ENCODE measurements at regions of chr5 and their contacts with region 1.

Region 1: DNA sequence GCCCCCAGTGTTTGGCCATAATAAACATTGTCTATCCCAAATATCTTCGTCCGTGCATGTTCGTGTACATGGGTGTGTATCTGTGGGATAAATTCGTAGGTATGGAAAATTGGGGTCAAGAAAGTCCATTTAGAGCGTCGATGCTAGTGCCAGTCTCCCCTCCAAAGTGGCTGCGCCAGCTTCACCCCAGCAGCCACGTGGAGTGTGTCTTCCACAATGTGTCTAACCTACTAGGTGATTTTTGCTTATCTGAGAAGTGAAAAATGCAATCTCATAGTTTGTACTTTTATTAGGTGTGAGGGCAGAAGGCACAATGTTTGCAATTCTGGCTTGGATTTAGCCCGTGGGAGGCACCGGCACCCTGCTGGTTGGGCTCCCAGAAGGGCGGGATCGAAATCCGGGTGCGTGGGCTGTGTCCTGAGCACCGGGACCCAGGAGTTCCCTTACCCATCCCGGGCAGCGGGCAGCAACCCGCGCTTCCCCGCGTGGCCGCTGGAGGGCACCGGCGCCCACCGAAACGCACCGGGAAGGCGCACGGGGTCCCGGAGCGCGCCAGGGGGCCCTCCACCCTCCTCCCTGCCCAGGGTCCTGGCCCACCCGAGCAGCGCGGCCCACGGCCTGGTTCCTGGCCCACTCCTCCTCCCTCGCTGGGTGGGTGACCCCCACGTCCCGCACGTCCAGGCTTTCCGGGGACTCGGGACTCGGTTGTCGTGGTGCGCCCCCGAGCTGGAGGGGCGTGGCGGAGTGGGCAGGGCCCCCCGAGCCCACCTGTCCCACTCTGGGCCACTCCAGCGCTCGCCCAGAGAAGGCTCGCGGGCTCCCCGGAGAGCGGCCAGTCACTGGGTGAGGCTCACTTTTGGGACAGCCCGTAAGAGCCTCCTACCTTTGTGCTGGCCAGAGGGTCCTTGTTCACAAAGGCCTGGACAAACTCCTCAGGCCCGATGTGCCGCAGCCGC is 55.4 kb upstream of the RNF130 start:
- DNase-seq: no peak
- ATAC-seq: peak; percentile 92
- H3K4me3 ChIP-seq: no peak overlapping the region
- H3K27ac ChIP-seq: no peak overlapping the region
- H3K4me1 ChIP-seq: peaks cover 0 to 9% of the 10 kb centered on the region in 2 experiments; a peak in 1 of 4 replicates
- H3K27me3 ChIP-seq: no peaks in the 10 kb centered on the region
- CTCF ChIP-seq: peak; percentile 81 to 84 (median 83)
- POLR2A ChIP-seq: no peak
- RAD21 ChIP-seq: peak; percentile 86

Region 2: DNA sequence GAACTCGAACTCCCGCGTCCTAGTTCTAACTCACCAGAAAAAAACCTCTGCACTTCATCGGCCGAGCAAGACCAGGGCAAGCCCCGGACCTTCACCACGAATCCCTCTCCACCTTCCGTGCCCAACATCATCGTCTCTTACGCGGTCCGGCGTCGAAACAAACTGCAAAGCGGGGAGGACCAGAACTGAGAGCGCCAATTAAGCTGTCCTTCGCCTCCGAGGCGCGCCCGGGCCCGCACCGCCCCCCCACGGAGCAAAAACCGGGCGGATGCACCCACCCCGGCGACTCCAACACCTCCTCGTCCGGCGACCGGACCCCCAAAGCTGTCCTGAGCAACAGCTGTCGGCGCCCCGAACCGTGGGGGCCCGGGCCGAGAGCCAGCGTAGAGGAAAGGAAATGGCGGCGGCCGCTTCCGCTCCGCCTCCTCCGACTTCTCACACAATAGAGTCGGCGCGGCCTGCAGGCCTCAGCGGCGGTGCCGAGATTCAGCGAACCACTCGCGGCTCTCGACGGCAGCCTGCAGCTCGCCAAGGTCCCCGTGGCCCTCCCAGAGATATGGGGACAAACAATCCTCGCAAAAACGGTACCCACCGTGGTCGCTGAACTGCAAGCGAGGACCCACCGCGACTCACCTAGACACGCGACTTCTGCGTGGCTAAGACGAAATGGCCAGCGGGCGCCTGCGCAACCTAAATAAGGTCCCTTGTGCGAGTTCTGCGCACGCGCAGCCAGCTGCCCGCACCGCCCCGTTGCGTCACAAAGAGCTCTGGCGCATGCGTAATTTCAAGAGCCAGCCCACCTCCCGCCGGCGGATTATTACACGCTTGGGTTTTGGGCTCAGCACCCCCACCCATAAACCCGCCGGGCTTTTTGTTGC is 503.8 kb before region 1 on chr5 and contains the start of gene HNRNPH1:
- CTCF ChIA-PET with region 1: no interaction called
- POLR2A ChIA-PET with region 1: no interaction called
- RAD21 ChIA-PET with region 1: no interaction called
- intact Hi-C with region 1: no loop called
- DNase-seq: peak; percentile 97
- ATAC-seq: peak; percentile 77
- H3K4me3 ChIP-seq: peak within 1 kb of the TSS; percentile 91 to 98
- H3K27ac ChIP-seq: peak within 1 kb of the TSS; percentile 97
- H3K4me1 ChIP-seq: peaks cover 21 to 35% of the 10 kb centered on the region in 2 experiments
- H3K27me3 ChIP-seq: no peaks in the 10 kb centered on the region
- CTCF ChIP-seq: no peak
- POLR2A ChIP-seq: peak; percentile 99
- RAD21 ChIP-seq: no peak
- total RNA-seq, gene HNRNPH1: 788 TPM

Region 3: GRCh38 chr5:179858586-179859427 is 268.2 kb before region 1 on chr5 and contains the start of gene MRNIP:
- CTCF ChIA-PET with region 1: no interaction called
- POLR2A ChIA-PET with region 1: no interaction called
- RAD21 ChIA-PET with region 1: no interaction called
- intact Hi-C with region 1: no loop called
- DNase-seq: peak; percentile 86
- ATAC-seq: peak; percentile 95
- H3K4me3 ChIP-seq: peak within 1 kb of the TSS; percentile 92 to 99
- H3K27ac ChIP-seq: peak within 1 kb of the TSS; percentile 73
- H3K4me1 ChIP-seq: peaks cover 2 to 12% of the 10 kb centered on the region in 2 experiments; a peak in 1 of 4 replicates
- H3K27me3 ChIP-seq: no peaks in the 10 kb centered on the region
- CTCF ChIP-seq: no peak
- POLR2A ChIP-seq: peak; percentile 89
- RAD21 ChIP-seq: 0 out of 2 replicates have a peak, but pooled peaks have one; percentile 9
- total RNA-seq, gene MRNIP: 36.2 TPM

Region 4: DNA sequence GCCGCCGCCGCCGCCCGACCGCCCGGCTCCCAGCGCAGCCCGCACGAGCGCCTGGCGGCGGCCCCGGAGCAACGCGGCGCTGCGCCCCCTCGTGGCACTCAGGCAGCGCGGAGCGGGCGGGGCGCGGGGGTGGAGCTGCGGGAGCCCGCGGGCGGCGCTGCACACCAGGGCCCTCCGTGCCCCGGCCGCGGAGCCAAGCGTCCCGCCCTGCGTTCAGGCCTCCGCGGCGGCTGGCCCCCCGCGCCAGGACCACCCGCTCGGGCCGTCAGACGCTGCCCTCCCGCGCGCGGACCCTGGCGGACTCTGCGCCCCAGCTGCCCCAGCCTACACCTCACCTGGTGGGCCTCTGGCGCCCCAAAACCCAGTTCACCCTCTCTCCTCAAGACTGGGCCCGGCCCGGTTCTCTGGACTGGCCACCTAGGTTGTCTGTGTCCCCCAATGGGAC is 82.2 kb after region 1 on chr5 and contains the start of gene RASGEF1C:
- CTCF ChIA-PET with region 1: interaction called, 3 read pairs
- POLR2A ChIA-PET with region 1: no interaction called
- RAD21 ChIA-PET with region 1: no interaction called
- intact Hi-C with region 1: loop called (anchors 2 kb)
- DNase-seq: peak; percentile 19
- ATAC-seq: peak; percentile 93
- H3K4me3 ChIP-seq: peak within 1 kb of the TSS; percentile 47 to 60
- H3K27ac ChIP-seq: peak within 1 kb of the TSS; percentile 34; the same call in 1 of the 2 replicates
- H3K4me1 ChIP-seq: peaks cover 5 to 14% of the 10 kb centered on the region in 2 experiments; a peak in 3 of 4 replicates
- H3K27me3 ChIP-seq: no peaks in the 10 kb centered on the region
- CTCF ChIP-seq: peak in 2 of 3 experiments; percentile 36 to 37; a peak in 3 of 6 replicates
- POLR2A ChIP-seq: no peak
- RAD21 ChIP-seq: 0 out of 2 replicates have a peak, but pooled peaks have one; percentile 16
- total RNA-seq, gene RASGEF1C: 1.2 TPM

Region 5: GRCh38 chr5:180315762-180316212 is 188.8 kb after region 1 on chr5:
- CTCF ChIA-PET with region 1: no interaction called
- POLR2A ChIA-PET with region 1: no interaction called
- RAD21 ChIA-PET with region 1: no interaction called
- intact Hi-C with region 1: loop called (anchors 1 kb)
- DNase-seq: peak; percentile 19
- ATAC-seq: peak; percentile 87
- H3K4me3 ChIP-seq: no peak overlapping the region
- H3K27ac ChIP-seq: no peak overlapping the region
- H3K4me1 ChIP-seq: no peaks in the 10 kb centered on the region
- H3K27me3 ChIP-seq: no peaks in the 10 kb centered on the region
- CTCF ChIP-seq: peak; percentile 89 to 100 (median 98)
- POLR2A ChIP-seq: no peak
- RAD21 ChIP-seq: peak; percentile 65

Region 6: DNA sequence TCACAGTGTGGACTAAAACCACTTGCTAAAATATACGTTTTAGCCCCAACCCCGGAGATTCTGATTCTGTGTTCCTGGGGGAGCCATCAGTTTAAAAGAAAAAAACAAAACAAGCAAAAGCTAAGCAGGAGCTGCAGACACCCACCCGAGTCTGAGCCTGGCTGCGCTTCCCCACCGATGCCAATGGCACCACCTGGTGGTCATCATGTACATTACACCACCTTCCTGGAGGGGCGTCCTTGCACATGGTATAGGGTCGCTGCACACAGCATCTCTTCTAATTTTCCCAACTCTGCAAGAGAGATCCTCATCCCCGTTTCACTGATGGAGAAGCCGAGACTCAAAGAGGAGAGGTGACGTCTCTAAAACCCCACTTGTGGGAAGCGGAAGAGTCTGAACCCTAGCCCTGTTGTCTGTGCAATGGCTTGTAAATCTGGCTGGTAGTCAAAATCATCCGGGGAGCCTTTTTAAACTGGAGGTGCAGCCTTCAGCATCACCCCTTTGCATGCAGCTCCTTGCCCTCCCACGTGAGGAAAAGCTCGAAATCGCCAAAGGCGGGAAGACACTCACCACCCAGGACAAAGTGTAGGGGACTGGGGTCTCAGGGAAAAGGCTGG is 344.1 kb after region 1 on chr5:
- CTCF ChIA-PET with region 1: no interaction called
- POLR2A ChIA-PET with region 1: no interaction called
- RAD21 ChIA-PET with region 1: no interaction called
- intact Hi-C with region 1: loop called (anchors 1 kb)
- DNase-seq: peak; percentile 32
- ATAC-seq: peak; percentile 85
- H3K4me3 ChIP-seq: no peak overlapping the region
- H3K27ac ChIP-seq: no peak overlapping the region
- H3K4me1 ChIP-seq: peaks cover 7 to 14% of the 10 kb centered on the region in 2 experiments; a peak in 3 of 4 replicates
- H3K27me3 ChIP-seq: no peaks in the 10 kb centered on the region
- CTCF ChIP-seq: peak; percentile 83 to 96 (median 95)
- POLR2A ChIP-seq: no peak
- RAD21 ChIP-seq: peak; percentile 93

Region 7: DNA sequence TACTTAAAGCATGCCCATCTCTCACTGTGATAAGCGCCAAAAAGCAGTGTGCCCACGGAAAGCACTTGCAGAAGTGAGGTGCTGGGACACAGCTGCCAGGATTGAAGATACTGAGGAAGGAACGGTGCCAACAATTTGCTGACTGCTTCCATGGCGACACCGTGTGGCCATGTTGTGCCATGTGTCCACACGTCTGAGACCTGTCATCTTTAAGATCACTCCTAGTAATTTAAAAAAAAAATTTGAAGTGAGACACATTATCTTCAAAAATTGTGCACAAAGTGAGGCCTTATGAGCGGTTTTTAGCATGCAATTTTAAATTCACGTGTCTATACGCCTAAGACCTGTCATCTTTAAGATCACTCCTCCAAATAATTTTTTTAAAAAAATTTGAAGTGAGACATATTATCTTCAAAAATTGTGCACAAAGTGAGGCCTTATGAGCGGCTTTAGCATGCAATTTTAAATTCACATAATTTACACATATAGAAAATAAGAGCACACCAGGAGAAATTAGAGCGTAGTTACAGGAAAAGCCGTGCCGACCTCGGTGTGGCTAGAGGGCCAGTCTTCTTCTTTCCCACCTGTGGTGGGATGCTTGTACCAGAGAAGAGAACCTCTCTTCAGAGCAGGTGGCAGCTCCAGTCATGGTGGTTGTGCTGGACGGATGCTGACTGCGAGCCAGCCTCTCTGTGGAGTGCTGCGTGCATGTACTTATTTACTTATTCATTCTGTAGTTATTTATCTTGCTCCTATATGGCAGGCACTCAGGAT is 543.8 kb after region 1 on chr5:
- CTCF ChIA-PET with region 1: no interaction called
- POLR2A ChIA-PET with region 1: no interaction called
- RAD21 ChIA-PET with region 1: no interaction called
- intact Hi-C with region 1: loop called (anchors 5 kb)
- DNase-seq: peak; percentile 42
- ATAC-seq: peak; percentile 89
- H3K4me3 ChIP-seq: no peak overlapping the region
- H3K27ac ChIP-seq: no peak overlapping the region
- H3K4me1 ChIP-seq: peaks cover 0 to 3% of the 10 kb centered on the region in 2 experiments; a peak in 2 of 4 replicates
- H3K27me3 ChIP-seq: no peaks in the 10 kb centered on the region
- CTCF ChIP-seq: peak; percentile 70 to 82 (median 78)
- POLR2A ChIP-seq: no peak
- RAD21 ChIP-seq: peak; percentile 80

Measured in HCT116 (cell line).